ENCODE measurements at regions of chr19 and their contacts with region 1.

Region 1: GRCh38 chr19:1863726-1864480 is 524 bp upstream of the KLF16 start:
- DNase-seq: peak; percentile 85
- ATAC-seq: peak; percentile 73
- H3K4me3 ChIP-seq: peak overlapping the region; percentile 66 to 70
- H3K27ac ChIP-seq: peak overlapping the region; percentile 99
- H3K4me1 ChIP-seq: peaks cover 34 to 50% of the 10 kb centered on the region in 2 experiments
- H3K27me3 ChIP-seq: no peaks in the 10 kb centered on the region
- CTCF ChIP-seq: no peak
- POLR2A ChIP-seq: no peak
- RAD21 ChIP-seq: no peak

Region 2: DNA sequence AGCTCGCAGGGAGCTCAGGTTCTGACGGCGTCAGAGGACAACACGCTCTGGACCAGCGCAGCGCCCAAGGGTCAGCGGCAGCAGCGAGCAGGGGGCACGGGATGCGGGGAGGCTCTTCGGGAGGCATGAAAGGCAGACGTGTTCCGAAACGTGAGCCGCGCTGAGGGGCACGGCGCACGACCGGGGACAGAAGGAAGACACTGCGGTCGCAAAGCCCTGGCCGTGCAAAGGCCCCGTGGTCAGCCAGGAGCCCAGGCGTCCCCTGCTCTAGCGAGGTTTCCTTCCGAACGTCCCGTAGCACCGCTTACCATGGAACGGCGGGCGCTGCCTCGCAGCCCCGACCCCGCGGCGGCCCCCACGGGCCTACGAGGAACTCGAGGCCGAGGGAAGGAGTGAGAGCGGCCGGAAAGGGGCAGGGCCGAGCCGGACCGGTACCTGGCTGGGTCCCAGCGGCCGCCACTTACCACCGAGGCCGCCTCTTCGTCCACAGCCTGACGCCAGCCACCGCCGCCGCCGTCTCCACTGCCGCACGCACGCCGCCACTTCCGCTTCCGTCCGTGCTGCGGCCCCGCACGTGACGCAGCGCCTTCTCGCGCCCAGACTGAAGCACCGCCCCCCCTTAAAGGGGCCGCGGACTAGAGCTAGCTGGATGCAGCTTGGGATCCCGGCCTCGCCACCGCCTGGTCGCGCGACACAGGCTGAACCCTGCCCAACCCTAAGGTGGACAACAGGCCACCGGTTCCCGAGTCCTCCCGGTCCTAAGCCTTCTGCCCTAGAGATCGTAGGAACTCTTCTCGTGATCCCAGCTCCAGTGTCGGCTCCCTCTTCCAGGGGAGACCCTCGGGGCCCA is 12.0 kb after region 1 on chr19:
- CTCF ChIA-PET with region 1: interaction called, 12 read pairs
- POLR2A ChIA-PET with region 1: interaction called, 10 read pairs
- RAD21 ChIA-PET with region 1: no interaction called
- intact Hi-C with region 1: no loop called
- DNase-seq: peak; percentile 68
- ATAC-seq: peak; percentile 96
- H3K4me3 ChIP-seq: peak overlapping the region; percentile 76 to 95
- H3K27ac ChIP-seq: peak overlapping the region; percentile 95
- H3K4me1 ChIP-seq: peaks cover 12 to 20% of the 10 kb centered on the region in 2 experiments
- H3K27me3 ChIP-seq: no peaks in the 10 kb centered on the region
- CTCF ChIP-seq: peak in 1 of 3 experiments; percentile 14; a peak in 1 of 6 replicates
- POLR2A ChIP-seq: peak; percentile 69
- RAD21 ChIP-seq: no peak

Region 3: DNA sequence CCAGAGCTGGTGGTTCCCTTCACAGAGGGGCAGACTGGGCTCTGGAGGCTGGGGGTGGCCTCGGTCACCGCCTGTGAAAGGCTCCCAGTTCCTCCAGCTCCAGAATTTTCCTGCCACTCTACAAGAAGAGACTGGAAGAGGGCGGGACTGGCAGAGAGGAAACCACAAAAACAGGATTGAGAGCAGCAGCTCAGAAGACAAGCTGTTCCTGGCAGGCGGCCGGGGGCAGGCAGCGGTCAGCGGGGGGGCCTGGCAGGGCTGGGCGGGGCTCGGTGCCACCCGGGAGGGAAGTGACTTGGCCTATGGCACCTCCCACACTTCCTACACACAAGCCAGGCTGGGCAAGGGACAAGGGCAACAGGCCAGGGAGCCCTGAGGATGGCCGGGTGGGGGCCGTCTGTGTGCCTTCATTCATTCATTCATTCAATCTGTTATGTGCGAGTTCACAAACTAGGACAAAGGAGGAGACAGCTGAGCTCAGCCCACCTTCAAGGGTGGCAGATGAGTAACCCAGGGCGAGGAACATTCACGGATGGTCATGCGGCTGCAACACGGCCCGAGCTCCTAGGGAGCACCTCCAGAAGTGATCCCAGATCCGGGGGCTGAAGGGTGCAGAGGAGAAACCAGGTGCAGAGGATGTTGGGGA is 168.5 kb after region 1 on chr19:
- CTCF ChIA-PET with region 1: no interaction called
- POLR2A ChIA-PET with region 1: no interaction called
- RAD21 ChIA-PET with region 1: no interaction called
- intact Hi-C with region 1: no loop called
- DNase-seq: peak; percentile 84
- ATAC-seq: peak; percentile 64
- H3K4me3 ChIP-seq: peak overlapping the region; percentile 36 to 57
- H3K27ac ChIP-seq: peak overlapping the region; percentile 93
- H3K4me1 ChIP-seq: peaks cover 62 to 82% of the 10 kb centered on the region in 2 experiments
- H3K27me3 ChIP-seq: no peaks in the 10 kb centered on the region
- CTCF ChIP-seq: no peak
- POLR2A ChIP-seq: no peak
- RAD21 ChIP-seq: no peak